A673 (cell line): ENCODE measurements at regions of chr19 and their contacts with region 1.

Region 1: DNA sequence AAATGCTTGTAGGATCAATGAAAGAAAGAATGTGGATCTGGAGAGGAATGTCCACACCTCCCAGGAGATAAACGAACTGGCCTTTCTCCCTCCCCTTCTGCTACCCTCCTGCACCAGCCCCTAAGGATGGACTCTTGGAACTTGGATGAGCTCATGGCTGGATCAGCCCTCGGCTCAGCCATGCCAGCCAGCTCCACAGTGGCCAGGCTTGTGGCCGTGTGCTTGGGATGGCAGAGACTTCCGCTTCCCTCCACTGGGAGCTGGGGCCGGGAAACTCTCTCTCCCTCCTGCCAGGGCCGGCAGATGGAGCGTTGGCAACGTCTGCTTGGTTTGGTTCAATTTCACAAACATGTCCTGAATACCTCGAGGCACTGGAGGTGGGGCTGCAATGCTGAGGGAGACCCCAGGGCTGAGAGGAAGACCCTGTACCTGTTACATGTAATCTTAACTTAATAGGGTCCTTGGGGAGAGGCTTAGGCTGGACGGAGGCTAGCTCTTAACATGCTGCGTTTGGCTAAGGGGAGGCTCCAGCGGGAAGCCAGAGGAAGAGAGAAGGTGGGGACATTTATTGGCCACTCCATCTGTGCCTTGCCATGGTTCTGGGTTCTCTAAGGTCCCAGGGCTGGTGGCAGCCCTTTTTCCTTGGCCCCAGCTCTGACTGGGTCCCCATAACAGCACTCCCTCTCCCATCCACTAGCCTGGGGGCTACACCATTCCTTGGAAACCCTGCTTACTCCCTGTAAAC is 152.5 kb downstream of the IER2 start:
- DNase-seq: no peak
- H3K4me3 ChIP-seq: no peak overlapping the region
- H3K27ac ChIP-seq: no peak overlapping the region
- H3K4me1 ChIP-seq: peaks cover 7% of the 10 kb centered on the region
- H3K27me3 ChIP-seq: no peaks in the 10 kb centered on the region
- CTCF ChIP-seq: no peak

Region 2: GRCh38 chr19:13282486-13283065 is 20.1 kb before region 1 on chr19:
- CTCF ChIA-PET with region 1: no interaction called
- POLR2A ChIA-PET with region 1: interaction called, 10 read pairs
- intact Hi-C with region 1: no loop called
- DNase-seq: peak; percentile 11
- H3K4me3 ChIP-seq: no peak overlapping the region
- H3K27ac ChIP-seq: no peak overlapping the region
- H3K4me1 ChIP-seq: peaks cover 10% of the 10 kb centered on the region
- H3K27me3 ChIP-seq: no peaks in the 10 kb centered on the region
- CTCF ChIP-seq: no peak

Region 3: DNA sequence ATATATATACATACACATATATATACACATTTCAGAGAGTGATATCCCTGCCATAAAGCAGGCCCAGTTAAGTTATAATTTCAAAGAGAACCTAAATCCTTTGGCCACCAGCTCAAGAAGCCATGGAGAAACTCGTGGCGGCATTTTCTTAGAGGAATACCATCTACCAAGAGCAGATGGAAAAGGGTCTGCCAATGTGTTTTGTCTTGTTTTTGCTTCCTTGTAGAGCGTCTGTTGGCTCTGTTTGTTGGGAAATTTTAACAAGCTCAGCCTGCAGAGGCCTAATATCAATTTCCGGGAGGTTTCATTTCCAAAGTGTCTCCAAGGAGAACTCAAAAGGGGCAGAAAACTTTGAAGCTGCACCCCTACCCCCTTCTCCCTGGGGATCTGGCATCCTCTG is 12.0 kb before region 1 on chr19:
- CTCF ChIA-PET with region 1: interaction called, 16 read pairs
- POLR2A ChIA-PET with region 1: no interaction called
- intact Hi-C with region 1: no loop called
- DNase-seq: no peak
- H3K4me3 ChIP-seq: no peak overlapping the region
- H3K27ac ChIP-seq: no peak overlapping the region
- H3K4me1 ChIP-seq: no peaks in the 10 kb centered on the region
- H3K27me3 ChIP-seq: no peaks in the 10 kb centered on the region
- CTCF ChIP-seq: no peak